ENCODE measurements at regions of chr10 and their contacts with region 1.

Region 1: GRCh38 chr10:128035557-128035973 is 90.7 kb downstream of the MKI67 start:
- DNase-seq: peak; percentile 73
- CTCF ChIP-seq: peak; percentile 68

Region 2: DNA sequence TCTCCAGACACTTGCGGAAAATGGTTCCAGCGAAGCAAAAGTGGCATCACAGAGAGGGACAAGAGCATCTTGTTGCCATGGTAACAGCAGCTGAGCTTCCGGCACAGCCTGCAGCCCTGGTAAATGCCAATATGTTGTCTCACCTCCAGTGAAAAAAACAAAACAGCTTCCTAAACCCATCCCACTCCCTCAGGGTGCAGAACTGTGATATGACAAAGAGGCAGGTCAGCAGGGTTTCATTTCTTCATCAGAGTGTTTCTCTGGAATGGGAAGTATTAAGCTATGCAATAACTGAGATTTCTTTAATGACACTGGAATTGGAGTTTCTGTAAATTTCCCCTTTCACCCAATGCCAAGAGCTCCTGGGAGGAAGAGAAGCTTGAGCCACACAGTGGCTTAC is 233.0 kb before region 1 on chr10:
- CTCF ChIA-PET with region 1: no interaction called
- POLR2A ChIA-PET with region 1: no interaction called
- DNase-seq: no peak
- CTCF ChIP-seq: no peak

Region 3: GRCh38 chr10:128011175-128011979 is 24.2 kb before region 1 on chr10:
- CTCF ChIA-PET with region 1: interaction called, 41 read pairs
- POLR2A ChIA-PET with region 1: no interaction called
- DNase-seq: peak; percentile 92
- CTCF ChIP-seq: peak; percentile 93

Region 4: DNA sequence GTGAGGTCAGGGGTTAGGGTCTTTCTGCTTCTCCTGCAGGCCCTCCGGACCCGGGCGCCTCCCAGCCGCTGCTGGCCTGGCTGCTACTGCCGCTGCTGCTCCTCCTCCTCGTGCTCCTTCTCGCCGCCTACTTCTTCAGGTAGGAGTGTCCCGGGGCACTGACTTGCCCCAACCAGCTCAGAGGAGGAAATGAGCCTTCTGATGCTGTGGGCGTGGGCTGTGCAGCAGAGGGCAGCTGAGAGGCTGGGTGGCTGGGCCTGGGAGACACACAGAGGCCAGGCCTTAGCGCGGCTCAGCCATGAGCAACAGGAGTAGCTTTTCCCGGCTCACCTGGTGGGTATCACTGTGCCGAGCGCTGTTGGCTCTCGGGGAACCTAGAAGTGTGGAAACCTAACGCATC is 11.8 kb after region 1 on chr10:
- CTCF ChIA-PET with region 1: interaction called, 132 read pairs
- POLR2A ChIA-PET with region 1: no interaction called
- DNase-seq: peak; percentile 91
- CTCF ChIP-seq: no peak

Region 5: GRCh38 chr10:128064108-128064969 is 28.8 kb after region 1 on chr10:
- CTCF ChIA-PET with region 1: interaction called, 335 read pairs
- POLR2A ChIA-PET with region 1: no interaction called
- DNase-seq: peak; percentile 53
- CTCF ChIP-seq: no peak

Region 6: DNA sequence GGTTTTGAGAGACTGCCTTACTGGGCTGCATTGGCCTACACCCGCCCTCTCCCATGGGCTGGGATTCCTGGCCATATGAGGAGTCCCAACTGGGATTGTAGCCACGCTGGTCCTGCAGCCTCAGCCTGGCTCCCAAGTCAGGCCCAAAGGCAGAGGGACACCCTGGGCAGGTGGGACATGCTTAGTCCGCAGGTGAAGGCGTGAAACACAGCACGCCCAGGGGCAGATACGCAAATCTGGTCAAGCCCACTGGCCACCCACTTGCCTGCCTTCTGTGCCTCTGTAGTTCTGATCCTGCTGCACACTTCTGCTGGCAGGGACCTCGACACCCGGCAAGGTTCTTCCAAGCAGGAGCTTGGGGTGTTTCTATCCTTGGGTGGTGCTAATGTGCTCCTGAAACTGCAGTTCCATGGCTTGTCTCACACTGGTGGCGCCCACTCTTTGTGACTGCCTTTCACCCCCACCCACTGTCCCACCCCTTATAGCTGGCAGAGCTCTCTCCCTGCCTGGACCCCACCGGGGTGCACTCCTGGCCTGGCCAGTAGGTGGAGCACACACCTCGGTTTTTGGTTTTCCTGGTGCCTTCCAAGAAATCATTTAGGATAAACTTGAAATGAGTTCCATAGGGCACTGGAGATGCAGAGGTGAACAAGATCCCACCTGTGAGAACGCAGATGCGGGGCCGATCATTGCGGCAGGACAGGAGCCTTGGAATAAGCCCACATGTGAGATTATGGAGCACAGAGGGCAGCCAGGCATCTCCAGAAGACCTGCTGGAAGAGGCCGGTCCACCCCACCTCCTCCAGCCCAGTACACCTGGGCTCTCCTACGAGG is 42.8 kb after region 1 on chr10:
- CTCF ChIA-PET with region 1: interaction called, 335 read pairs
- POLR2A ChIA-PET with region 1: no interaction called
- DNase-seq: peak; percentile 74
- CTCF ChIP-seq: peak; percentile 79

Region 7: DNA sequence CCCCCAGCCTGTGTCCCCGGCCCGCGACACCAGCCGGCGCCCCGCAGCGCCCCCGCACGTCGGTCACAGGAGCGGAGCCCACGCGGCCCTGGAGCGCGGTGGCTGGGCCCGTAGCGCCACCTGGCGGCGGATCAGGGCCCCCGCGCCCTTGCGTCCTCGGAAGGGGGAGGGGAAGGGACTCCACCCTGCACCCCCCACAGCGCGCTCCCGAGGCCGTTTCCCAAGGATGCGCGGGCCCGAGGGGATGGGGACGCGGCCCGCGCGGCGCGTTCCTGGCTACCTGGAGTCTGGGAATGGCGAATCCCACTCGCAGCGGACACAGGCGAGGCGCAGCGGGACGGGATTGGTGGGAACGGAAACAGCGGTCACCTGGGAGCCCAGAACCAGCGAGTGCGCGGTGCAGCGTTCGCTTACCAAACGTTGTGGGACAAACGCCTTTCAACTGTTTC is 114.5 kb after region 1 on chr10:
- CTCF ChIA-PET with region 1: interaction called, 15 read pairs
- POLR2A ChIA-PET with region 1: no interaction called
- DNase-seq: peak; percentile 92
- CTCF ChIP-seq: peak; percentile 100

Measured in GM10248 (cell line).